ENCODE measurements at regions of chr7 and their contacts with region 1.

Region 1: GRCh38 chr7:22885797-22886261 is 63.2 kb upstream of the TOMM7 start:
- DNase-seq: peak; percentile 83
- ATAC-seq: peak; percentile 86
- H3K4me3 Mint-ChIP-seq: peak overlapping the region; percentile 58
- H3K27ac Mint-ChIP-seq: peak overlapping the region; percentile 95
- H3K4me1 Mint-ChIP-seq: peaks cover 44% of the 10 kb centered on the region
- H3K27me3 Mint-ChIP-seq: no peaks in the 10 kb centered on the region

Region 2: DNA sequence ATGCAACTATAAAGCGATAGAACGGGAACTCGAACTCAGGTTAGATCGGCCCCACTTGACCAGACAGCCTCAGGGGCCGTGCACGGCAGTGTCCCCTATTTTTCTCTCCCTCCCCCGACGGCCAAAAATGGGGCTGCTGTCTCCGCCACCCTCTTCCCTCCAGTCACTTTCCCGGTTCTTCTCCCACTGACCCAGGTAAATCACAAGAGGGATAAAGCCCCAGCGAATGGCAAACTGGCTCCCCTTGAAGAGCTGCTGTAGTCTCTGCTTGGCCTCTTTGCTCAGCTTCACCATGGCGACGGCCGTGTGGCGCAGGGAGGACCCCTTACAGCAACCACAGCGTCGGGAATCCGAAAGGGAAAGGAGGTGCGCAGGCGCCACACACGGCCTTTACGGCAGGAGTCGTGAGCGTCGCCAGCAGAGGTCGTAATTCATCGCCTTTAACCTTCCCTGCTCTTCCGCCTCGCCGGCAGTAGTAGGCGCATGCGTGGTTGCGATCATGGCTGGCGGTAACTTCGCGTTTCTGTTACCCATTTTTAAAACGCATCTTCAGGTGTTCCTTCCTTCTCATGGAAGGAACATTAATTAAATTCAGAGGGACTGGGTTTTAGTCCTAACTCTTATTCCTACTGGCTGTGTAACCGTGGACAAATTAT is 63.2 kb before region 1 on chr7 and contains the start of gene TOMM7:
- CTCF ChIA-PET with region 1: interaction called, 6 read pairs
- POLR2A ChIA-PET with region 1: no interaction called
- intact Hi-C with region 1: loop called (anchors 1 to 5 kb)
- DNase-seq: peak; percentile 92
- ATAC-seq: peak; percentile 81
- H3K4me3 Mint-ChIP-seq: peak within 1 kb of the TSS; percentile 98
- H3K27ac Mint-ChIP-seq: peak within 1 kb of the TSS; percentile 93
- H3K4me1 Mint-ChIP-seq: peaks cover 35% of the 10 kb centered on the region
- H3K27me3 Mint-ChIP-seq: peaks cover 6% of the 10 kb centered on the region
- total RNA-seq, gene TOMM7: 73.7 to 254 TPM

Region 3: DNA sequence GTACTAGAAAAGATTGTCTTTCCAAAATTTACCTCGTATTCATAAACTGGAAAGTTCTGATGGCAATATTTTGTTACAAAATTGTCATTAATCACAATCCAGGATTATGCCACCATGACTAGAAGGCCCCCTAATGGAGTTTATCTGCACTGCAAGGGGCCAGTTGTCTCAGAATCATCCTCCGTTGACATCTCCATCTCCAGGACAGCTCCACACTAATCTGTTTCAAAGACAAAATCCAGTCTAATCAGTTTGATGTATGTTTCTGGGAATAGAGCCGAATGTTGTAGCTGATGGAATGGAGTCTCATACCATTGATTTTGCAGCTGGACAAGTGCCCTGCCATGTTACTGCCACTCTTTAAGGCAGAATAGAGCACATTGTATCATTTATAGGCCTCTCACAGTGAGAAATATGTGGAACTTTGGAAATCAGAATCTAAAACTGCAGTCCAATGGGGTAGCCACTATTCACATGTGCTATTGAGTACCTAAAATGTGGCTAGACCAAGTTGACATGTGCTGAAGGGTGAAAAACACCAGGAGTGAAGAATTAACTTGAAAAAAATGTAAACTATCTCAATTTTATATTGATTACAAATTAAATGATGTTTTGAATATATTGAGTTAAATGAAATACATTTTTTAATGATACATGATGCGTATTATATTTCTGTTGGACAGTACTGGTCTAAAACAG is 24.9 kb before region 1 on chr7:
- CTCF ChIA-PET with region 1: interaction called, 8 read pairs
- POLR2A ChIA-PET with region 1: interaction called, 4 read pairs
- intact Hi-C with region 1: loop called in 1 of 2 experiments (anchors 1 kb)
- DNase-seq: peak; percentile 45
- ATAC-seq: peak; percentile 44
- H3K4me3 Mint-ChIP-seq: no peak overlapping the region
- H3K27ac Mint-ChIP-seq: peak overlapping the region; percentile 51
- H3K4me1 Mint-ChIP-seq: peaks cover 51% of the 10 kb centered on the region
- H3K27me3 Mint-ChIP-seq: no peaks in the 10 kb centered on the region

Region 4: DNA sequence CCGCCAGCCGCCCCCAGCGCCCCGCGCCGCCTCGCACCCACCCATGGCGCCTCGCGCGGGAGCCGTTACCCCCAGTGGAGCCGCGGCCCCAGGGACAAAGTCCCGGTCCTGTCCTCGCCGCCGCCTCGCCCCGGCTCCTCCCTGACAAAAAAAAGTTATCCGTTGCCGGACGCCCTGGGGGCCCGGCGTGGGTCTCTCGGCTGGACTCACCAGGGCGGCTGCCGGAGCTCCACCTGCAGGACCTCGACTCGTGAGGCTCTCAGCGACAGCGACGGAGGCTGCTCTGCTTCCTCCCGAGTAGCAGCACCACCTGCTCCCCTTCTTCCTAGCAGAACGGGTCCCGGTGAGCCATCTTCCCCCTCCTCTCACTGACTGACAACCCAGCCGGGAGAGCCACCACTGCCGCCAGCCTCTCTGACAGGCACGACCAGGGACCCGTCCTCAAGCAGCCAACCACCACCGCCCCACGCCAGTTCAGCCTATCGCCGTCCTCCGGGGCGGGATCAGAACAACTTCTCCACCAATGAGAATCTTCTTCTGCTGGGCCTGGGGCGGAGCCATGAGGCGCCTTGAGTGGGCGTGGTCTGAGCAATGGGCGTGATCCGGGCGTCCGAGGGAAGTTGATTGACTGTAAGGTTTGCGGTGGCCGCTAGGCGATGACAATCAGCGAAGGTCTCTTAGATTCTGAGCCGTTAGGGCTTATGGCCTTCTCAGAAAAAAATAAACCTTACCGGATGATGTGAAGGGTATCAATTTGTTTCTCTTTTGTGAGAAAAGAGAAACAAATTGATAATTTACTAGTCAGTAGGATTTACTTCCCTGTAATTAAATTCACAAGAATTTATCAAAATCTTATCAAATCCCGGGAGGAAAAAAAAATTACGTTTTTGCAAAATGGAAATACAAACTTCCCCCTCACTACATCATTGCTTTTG is 128.2 kb after region 1 on chr7 and contains the start of gene HYCC1:
- CTCF ChIA-PET with region 1: interaction called, 3 read pairs
- POLR2A ChIA-PET with region 1: no interaction called
- intact Hi-C with region 1: loop called (anchors 1 to 2 kb)
- DNase-seq: peak; percentile 99
- ATAC-seq: peak; percentile 99
- H3K4me3 Mint-ChIP-seq: peak within 1 kb of the TSS; percentile 92
- H3K27ac Mint-ChIP-seq: peak within 1 kb of the TSS; percentile 83
- H3K4me1 Mint-ChIP-seq: peaks cover 24% of the 10 kb centered on the region
- H3K27me3 Mint-ChIP-seq: peaks cover 3% of the 10 kb centered on the region
- total RNA-seq, gene HYCC1: 19.2 to 23.9 TPM